Tibial artery (tissue), 4 donors: ENCODE measurements at regions of chr3 and their contacts with region 1.

Region 1: GRCh38 chr3:194472290-194472920 is 14.4 kb downstream of the ATP13A3 start:
- DNase-seq: no peak
- H3K4me3 ChIP-seq: no peak overlapping the region
- H3K27ac ChIP-seq: peak overlapping the region in 1 of 2 donors; percentile 43
- H3K4me1 ChIP-seq: peaks cover 0 to 85% (median 11%) of the 10 kb centered on the region in 4 donors
- H3K27me3 ChIP-seq: no peaks in the 10 kb centered on the region
- CTCF ChIP-seq: peak; percentile 93 to 95

Region 2: DNA sequence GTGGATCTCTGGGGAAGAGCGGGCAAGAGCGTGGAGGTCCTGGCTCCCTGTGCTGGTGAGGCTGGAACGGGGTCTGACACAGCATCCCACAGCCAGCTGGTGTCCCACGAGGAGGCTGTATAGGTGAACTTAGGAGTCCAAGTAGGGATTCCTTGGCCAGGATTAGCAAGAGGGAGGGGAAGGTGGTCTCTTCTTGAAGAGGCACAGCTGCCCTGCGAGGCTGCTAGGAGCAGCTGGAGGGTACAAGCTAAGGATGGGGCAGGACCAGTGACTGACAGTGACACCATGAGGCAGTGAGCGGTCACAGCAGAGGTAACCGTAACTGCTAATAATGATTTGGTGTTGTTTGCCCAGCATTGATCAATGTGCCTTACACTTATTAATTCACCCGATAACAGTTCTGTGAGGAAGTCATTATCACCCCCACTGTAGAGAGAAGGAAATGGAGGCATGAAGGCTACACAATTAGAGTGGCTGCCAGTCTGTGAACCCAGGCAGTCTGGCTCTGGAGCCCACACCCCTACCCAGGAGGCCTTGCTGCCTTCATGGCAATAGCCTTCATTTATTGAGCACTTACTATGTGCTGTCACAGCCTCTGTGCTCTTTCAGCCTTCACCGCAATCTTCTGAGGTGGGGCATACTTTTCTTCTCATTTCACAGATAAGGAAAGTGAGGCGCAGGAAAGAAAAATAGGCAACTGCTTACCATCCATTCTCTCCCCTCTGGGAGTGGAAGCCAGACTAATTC is 101.5 kb after region 1 on chr3:
- intact Hi-C with region 1: loop called (anchors 5 kb)
- DNase-seq: no peak
- H3K4me3 ChIP-seq: no peak overlapping the region
- H3K27ac ChIP-seq: peak overlapping the region; percentile 79 to 85
- H3K4me1 ChIP-seq: peaks cover 3 to 35% (median 22%) of the 10 kb centered on the region in 4 donors
- H3K27me3 ChIP-seq: no peaks in the 10 kb centered on the region
- CTCF ChIP-seq: peak; percentile 70 to 75

Region 3: GRCh38 chr3:194592798-194593752 is 120.7 kb after region 1 on chr3:
- intact Hi-C with region 1: loop called (anchors 5 kb)
- DNase-seq: peak; percentile 55 to 84
- H3K4me3 ChIP-seq: no peak overlapping the region
- H3K27ac ChIP-seq: peak overlapping the region; percentile 57 to 69
- H3K4me1 ChIP-seq: peaks cover 0 to 30% (median 8%) of the 10 kb centered on the region in 4 donors
- H3K27me3 ChIP-seq: no peaks in the 10 kb centered on the region
- CTCF ChIP-seq: no peak